Ovary (tissue), 10 donors: ENCODE measurements at regions of chr11 and their contacts with region 1.

Region 1: GRCh38 chr11:18526521-18527296 is at the start of gene TSG101:
- DNase-seq: peak; percentile 91 to 96 (median 95)
- H3K4me3 ChIP-seq: peak within 1 kb of the TSS; percentile 94
- H3K27ac ChIP-seq: peak within 1 kb of the TSS; percentile 77 to 91
- H3K4me1 ChIP-seq: peaks cover 7% of the 10 kb centered on the region
- H3K27me3 ChIP-seq: no peaks in the 10 kb centered on the region
- CTCF ChIP-seq: peak in 1 of 3 donors; percentile 27
- EP300 ChIP-seq: peak; percentile 19
- POLR2A ChIP-seq: peak; percentile 82
- total RNA-seq, gene TSG101: 36.2 to 105 (median 45.9) TPM

Region 2: GRCh38 chr11:18383388-18384156 is 143.1 kb before region 1 on chr11:
- intact Hi-C with region 1: loop called in 1 of 4 experiments (anchors 10 kb)
- DNase-seq: peak; percentile 40 to 64 (median 48)
- H3K4me3 ChIP-seq: no peak overlapping the region
- H3K27ac ChIP-seq: peak overlapping the region; percentile 23 to 84
- H3K4me1 ChIP-seq: peaks cover 10% of the 10 kb centered on the region
- H3K27me3 ChIP-seq: no peaks in the 10 kb centered on the region
- CTCF ChIP-seq: no peak
- EP300 ChIP-seq: no peak
- POLR2A ChIP-seq: no peak

Region 3: DNA sequence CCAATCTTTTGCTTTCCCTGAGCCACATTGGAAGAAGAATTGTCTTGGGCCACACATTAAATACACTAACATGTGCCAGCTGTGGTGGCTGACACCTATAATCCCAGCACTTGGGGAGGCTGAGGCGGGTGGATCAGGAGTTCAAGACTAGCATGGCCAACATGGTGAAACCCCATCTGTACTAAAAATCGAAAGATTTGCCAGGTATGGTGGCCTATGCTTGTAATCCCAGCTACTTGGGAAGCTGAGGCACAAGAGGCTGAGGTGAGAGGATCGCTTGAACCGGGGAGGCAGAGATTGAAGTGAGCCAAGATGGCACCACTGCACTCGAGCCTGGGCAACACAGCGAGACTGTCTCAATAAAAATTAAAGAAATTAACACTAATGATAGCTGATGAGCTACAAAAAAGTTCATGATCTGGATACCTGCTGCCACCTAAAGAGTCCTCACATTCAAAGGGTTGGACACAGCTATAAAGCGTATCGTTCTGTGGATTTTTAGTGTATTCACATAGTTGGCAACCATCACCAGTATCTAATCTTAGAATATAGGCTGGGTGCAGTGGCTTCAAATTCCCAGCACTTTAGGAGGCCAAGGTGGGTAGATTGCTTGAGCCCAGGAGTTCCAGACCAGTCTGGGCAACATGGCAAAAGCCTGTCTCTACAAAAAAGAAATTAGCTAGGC is 118.0 kb before region 1 on chr11:
- intact Hi-C with region 1: no loop called
- DNase-seq: no peak
- H3K4me3 ChIP-seq: no peak overlapping the region
- H3K27ac ChIP-seq: no peak overlapping the region
- H3K4me1 ChIP-seq: no peaks in the 10 kb centered on the region
- H3K27me3 ChIP-seq: no peaks in the 10 kb centered on the region
- CTCF ChIP-seq: no peak
- EP300 ChIP-seq: no peak
- POLR2A ChIP-seq: no peak

Region 4: DNA sequence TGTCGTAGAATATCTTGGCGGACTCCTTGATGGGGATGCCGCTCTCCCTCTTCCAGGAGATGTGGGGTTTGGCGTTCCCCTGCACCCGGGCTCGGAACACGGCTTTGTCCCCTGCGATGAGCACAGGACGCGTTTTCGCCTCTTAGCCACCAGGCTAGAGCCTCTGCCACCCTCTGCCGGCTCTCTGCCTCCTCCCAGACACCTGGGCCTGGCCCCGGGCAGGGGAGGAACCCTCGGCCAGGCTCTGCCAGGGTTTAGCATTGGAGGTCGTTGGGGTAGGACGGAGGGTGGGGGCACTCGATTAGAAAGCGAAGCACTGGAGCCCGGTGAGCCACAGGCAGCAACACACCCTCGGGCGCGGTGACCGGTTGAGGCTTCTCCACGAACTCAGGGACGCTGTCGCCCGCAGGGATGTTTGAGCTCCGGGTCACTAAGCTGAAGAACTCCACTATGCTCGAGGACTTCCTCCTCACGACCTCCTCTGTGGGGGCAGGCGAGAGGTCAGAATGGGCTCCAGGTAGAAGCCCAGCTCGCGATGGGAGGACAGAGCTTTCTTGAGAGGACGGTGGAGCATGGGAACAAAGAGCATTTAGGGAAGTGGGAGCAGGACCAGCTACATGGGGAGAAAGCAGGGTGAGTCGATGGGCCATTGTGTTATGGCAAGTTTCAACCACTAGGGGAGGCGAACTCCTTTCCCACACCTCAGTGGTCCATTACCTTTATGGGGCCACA is 195.0 kb after region 1 on chr11:
- intact Hi-C with region 1: loop called in 2 of 4 experiments (anchors 10 kb)
- DNase-seq: peak; percentile 65 to 71 (median 67)
- H3K4me3 ChIP-seq: peak overlapping the region; percentile 64
- H3K27ac ChIP-seq: peak overlapping the region; percentile 71 to 80
- H3K4me1 ChIP-seq: peaks cover 3% of the 10 kb centered on the region
- H3K27me3 ChIP-seq: no peaks in the 10 kb centered on the region
- CTCF ChIP-seq: peak; percentile 33 to 59 (median 58)
- EP300 ChIP-seq: no peak
- POLR2A ChIP-seq: no peak